ENCODE measurements at regions of chr1 and their contacts with region 1.

Region 1: DNA sequence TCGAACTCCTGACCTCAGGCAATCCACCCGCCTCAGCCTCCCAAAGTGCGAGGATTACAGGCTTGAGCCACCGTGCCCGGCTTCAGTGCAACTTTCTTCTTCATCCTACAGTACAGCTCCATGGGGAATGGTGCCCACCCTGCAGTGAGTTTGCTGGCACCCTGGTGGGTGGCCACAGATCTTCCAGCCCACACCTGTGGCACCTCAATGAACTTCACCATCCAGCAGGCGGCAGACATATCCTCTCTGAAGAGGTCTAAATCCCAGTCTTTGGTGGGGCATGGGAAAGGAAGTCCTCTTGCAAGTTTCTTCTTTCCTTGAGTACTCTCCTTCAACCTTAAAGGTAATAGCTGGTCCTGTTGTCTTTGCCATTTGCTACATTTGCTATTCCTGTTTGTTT is 18.1 kb upstream of the ZBTB8A start:
- DNase-seq: no peak
- H3K4me3 ChIP-seq: no peak overlapping the region
- H3K27ac ChIP-seq: no peak overlapping the region
- H3K4me1 ChIP-seq: no peaks in the 10 kb centered on the region
- H3K27me3 ChIP-seq: no peaks in the 10 kb centered on the region
- CTCF ChIP-seq: no peak
- EP300 ChIP-seq: no peak
- RAD21 ChIP-seq: no peak

Region 2: GRCh38 chr1:32372149-32372756 is 148.9 kb before region 1 on chr1:
- CTCF ChIA-PET with region 1: no interaction called
- POLR2A ChIA-PET with region 1: no interaction called
- DNase-seq: no peak
- H3K4me3 ChIP-seq: no peak overlapping the region
- H3K27ac ChIP-seq: no peak overlapping the region
- H3K4me1 ChIP-seq: no peaks in the 10 kb centered on the region
- H3K27me3 ChIP-seq: no peaks in the 10 kb centered on the region
- CTCF ChIP-seq: no peak
- EP300 ChIP-seq: no peak
- RAD21 ChIP-seq: peak; percentile 31; the same call in 1 of the 2 replicates

Region 3: GRCh38 chr1:32500387-32501209 is 20.6 kb before region 1 on chr1:
- CTCF ChIA-PET with region 1: interaction called, 13 read pairs
- POLR2A ChIA-PET with region 1: no interaction called
- DNase-seq: peak; percentile 90
- H3K4me3 ChIP-seq: peak overlapping the region; percentile 62 to 63; a peak in 3 of 4 replicates
- H3K27ac ChIP-seq: peak overlapping the region; percentile 68 to 86
- H3K4me1 ChIP-seq: peaks cover 0 to 5% of the 10 kb centered on the region in 2 experiments; a peak in 2 of 4 replicates
- H3K27me3 ChIP-seq: no peaks in the 10 kb centered on the region
- CTCF ChIP-seq: no peak
- EP300 ChIP-seq: no peak
- RAD21 ChIP-seq: no peak

Region 4: GRCh38 chr1:32508751-32509140 is 12.4 kb before region 1 on chr1:
- CTCF ChIA-PET with region 1: interaction called, 20 read pairs
- POLR2A ChIA-PET with region 1: no interaction called
- DNase-seq: no peak
- H3K4me3 ChIP-seq: no peak overlapping the region
- H3K27ac ChIP-seq: no peak overlapping the region
- H3K4me1 ChIP-seq: no peaks in the 10 kb centered on the region
- H3K27me3 ChIP-seq: no peaks in the 10 kb centered on the region
- CTCF ChIP-seq: no peak
- EP300 ChIP-seq: no peak
- RAD21 ChIP-seq: no peak

Region 5: GRCh38 chr1:32538887-32539583 is 17.9 kb after region 1 on chr1 and contains the start of gene ZBTB8A:
- CTCF ChIA-PET with region 1: interaction called, 22 read pairs
- POLR2A ChIA-PET with region 1: interaction called, 7 read pairs
- DNase-seq: peak; percentile 83
- H3K4me3 ChIP-seq: peak within 1 kb of the TSS; percentile 63 to 82
- H3K27ac ChIP-seq: peak within 1 kb of the TSS; percentile 64 to 77
- H3K4me1 ChIP-seq: peaks cover 5 to 9% of the 10 kb centered on the region in 2 experiments; a peak in 1 of 4 replicates
- H3K27me3 ChIP-seq: no peaks in the 10 kb centered on the region
- CTCF ChIP-seq: peak; percentile 26; the same call in 1 of the 2 replicates
- EP300 ChIP-seq: no peak
- RAD21 ChIP-seq: no peak
- polyA plus RNA-seq, gene ZBTB8A: 1.3 and 1.9 TPM in 2 replicates

Region 6: GRCh38 chr1:32619701-32620485 is 98.7 kb after region 1 on chr1:
- CTCF ChIA-PET with region 1: interaction called, 15 read pairs
- POLR2A ChIA-PET with region 1: no interaction called
- DNase-seq: no peak
- H3K4me3 ChIP-seq: no peak overlapping the region
- H3K27ac ChIP-seq: no peak overlapping the region
- H3K4me1 ChIP-seq: no peaks in the 10 kb centered on the region
- H3K27me3 ChIP-seq: no peaks in the 10 kb centered on the region
- CTCF ChIP-seq: peak; percentile 34
- EP300 ChIP-seq: no peak
- RAD21 ChIP-seq: peak; percentile 33; the same call in 1 of the 2 replicates

Measured in SK-N-SH (cell line).